Activated naive CD4-positive, alpha-beta T cell treated with anti-CD3 and anti-CD28 coated beads for 36 hours (primary cell): ENCODE measurements at regions of chr2 and their contacts with region 1.

Region 1: GRCh38 chr2:101736861-101737291 is 39.4 kb downstream of the MAP4K4 start:
- DNase-seq: peak; percentile 77
- H3K4me3 Mint-ChIP-seq: peak overlapping the region; percentile 8
- H3K27ac Mint-ChIP-seq: peak overlapping the region; percentile 89
- H3K4me1 Mint-ChIP-seq: peaks cover 90% of the 10 kb centered on the region
- H3K27me3 Mint-ChIP-seq: no peaks in the 10 kb centered on the region

Region 2: GRCh38 chr2:101012706-101013181 is 724.1 kb before region 1 on chr2:
- CTCF ChIA-PET with region 1: no interaction called
- intact Hi-C with region 1: no loop called
- DNase-seq: peak; percentile 44
- H3K4me3 Mint-ChIP-seq: no peak overlapping the region
- H3K27ac Mint-ChIP-seq: no peak overlapping the region
- H3K4me1 Mint-ChIP-seq: peaks cover 35% of the 10 kb centered on the region
- H3K27me3 Mint-ChIP-seq: no peaks in the 10 kb centered on the region

Region 3: GRCh38 chr2:101623031-101623521 is 113.8 kb before region 1 on chr2:
- CTCF ChIA-PET with region 1: no interaction called
- intact Hi-C with region 1: loop called (anchors 1 kb)
- DNase-seq: peak; percentile 17
- H3K4me3 Mint-ChIP-seq: peak overlapping the region; percentile 17
- H3K27ac Mint-ChIP-seq: peak overlapping the region; percentile 90
- H3K4me1 Mint-ChIP-seq: peaks cover 39% of the 10 kb centered on the region
- H3K27me3 Mint-ChIP-seq: no peaks in the 10 kb centered on the region

Region 4: GRCh38 chr2:101675512-101675911 is 61.4 kb before region 1 on chr2:
- CTCF ChIA-PET with region 1: no interaction called
- intact Hi-C with region 1: loop called (anchors 1 kb)
- DNase-seq: peak; percentile 21
- H3K4me3 Mint-ChIP-seq: no peak overlapping the region
- H3K27ac Mint-ChIP-seq: peak overlapping the region; percentile 3
- H3K4me1 Mint-ChIP-seq: peaks cover 23% of the 10 kb centered on the region
- H3K27me3 Mint-ChIP-seq: no peaks in the 10 kb centered on the region

Region 5: DNA sequence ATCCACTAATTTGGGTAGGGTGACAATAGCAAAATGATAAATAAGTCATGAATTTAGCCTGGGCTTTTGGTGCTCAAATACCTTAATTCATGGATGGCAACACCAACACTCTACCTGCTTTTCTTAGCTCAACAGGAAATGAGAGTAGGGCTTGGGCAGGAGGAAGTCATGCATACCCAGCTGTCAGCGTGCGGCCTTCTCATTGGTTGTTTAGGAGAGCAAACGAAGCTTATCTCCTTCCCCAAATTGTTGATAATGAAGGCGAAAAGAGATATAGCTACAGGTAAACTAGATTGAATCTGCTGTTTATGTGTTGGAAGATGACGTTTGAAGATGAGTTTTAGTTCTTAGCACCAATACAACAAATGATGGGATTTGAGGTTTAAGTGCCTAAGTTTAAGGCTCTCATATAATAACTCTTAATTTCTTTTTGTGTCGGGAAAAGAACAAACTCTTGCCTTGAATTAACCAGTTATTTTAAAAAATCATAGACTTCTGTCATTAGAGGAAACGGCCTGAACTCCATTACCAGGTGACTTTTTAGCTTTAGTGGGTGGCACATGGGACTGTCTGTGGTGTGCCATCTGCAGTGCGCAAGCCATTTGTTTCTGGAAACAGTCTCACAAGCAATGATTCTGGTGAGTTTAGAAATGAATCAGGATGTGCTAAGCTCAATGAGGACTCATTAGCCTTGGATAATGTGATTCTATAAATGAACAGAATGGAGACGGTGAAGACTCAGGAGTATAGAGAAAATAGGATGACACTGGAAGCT is 19.6 kb before region 1 on chr2:
- CTCF ChIA-PET with region 1: interaction called, 7 read pairs
- intact Hi-C with region 1: loop called (anchors 1 kb)
- DNase-seq: peak; percentile 75
- H3K4me3 Mint-ChIP-seq: peak overlapping the region; percentile 38
- H3K27ac Mint-ChIP-seq: peak overlapping the region; percentile 95
- H3K4me1 Mint-ChIP-seq: peaks cover 92% of the 10 kb centered on the region
- H3K27me3 Mint-ChIP-seq: no peaks in the 10 kb centered on the region

Region 6: DNA sequence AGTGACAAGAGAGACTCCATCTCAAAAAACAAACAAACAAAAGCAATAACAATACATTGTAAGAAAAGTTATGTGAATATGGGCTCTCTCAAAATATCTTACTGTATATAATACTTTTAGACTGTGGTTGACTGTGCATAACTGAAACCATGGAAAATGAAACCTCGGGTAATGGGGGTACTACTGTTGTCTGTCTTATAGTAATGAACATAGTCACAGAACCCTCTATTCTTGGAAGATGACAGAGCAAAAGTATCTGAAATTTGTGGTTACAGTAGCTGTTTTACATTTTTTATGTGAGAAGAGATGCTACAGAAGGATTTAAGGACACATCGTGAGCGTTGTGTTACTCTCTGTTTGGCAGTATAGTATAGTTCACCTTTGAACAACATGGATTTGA is 21.1 kb after region 1 on chr2:
- CTCF ChIA-PET with region 1: interaction called, 4 read pairs
- intact Hi-C with region 1: loop called (anchors 1 kb)
- DNase-seq: peak; percentile 60
- H3K4me3 Mint-ChIP-seq: peak overlapping the region; percentile 48
- H3K27ac Mint-ChIP-seq: peak overlapping the region; percentile 81
- H3K4me1 Mint-ChIP-seq: peaks cover 77% of the 10 kb centered on the region
- H3K27me3 Mint-ChIP-seq: no peaks in the 10 kb centered on the region

Region 7: DNA sequence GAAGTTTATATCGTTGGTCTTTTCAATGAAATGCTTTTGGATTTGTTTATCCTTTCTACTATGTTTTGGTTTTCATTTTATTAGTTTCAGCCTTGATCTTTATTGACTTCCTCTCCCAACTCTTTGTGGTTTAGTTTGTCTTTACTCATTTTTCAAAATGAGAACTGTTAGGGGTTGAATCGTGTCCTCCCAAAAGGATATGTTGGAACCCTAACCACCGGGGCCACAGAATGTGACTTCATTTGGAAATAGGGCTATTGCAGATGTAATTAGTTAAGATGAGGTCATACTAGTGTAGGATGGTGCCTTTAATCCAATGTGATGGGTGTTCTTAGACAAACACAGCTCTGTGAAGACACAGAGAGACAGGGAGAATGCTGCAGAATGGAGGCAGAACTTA is 194.5 kb after region 1 on chr2:
- CTCF ChIA-PET with region 1: no interaction called
- intact Hi-C with region 1: no loop called
- DNase-seq: no peak
- H3K4me3 Mint-ChIP-seq: no peak overlapping the region
- H3K27ac Mint-ChIP-seq: no peak overlapping the region
- H3K4me1 Mint-ChIP-seq: peaks cover 5% of the 10 kb centered on the region
- H3K27me3 Mint-ChIP-seq: peaks cover 2% of the 10 kb centered on the region

Region 8: DNA sequence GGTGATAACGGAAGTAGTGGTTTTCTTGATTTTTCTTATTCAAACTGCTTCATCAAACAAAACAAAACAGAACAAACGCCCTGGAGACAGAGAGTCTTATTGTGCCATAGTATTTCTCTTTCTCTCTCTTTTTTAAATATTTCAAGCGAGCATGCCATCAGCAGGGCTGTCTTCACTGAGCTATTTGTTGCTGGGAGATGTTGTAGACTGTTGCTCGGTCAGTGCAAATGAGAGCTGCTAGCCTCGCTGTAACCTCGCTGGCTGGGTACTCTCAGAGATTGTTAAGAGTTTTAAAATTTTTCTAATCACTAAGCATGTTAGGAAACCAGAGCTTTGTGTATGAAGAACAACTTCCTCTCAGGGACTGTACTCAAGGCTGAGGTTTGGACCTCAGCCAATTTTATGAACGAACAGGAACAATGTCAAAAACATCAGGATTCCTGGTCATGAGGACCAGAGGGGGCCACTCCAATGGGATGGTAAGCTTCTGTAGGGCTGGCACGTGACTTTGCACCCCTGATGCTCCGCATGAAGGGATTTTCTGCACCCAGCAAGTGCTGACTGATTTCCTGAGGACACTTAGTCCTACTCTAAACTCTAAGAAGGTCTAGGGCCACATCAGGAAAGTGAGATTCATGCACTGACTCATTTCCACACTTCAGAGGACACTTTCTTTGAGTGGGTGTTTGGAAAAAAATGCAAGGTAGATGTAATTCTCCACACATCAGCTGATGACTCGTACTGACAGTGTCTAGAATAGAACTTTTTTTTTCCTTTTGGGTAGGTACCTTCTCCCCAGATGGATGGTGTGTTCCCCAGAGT is 345.9 kb after region 1 on chr2:
- CTCF ChIA-PET with region 1: no interaction called
- intact Hi-C with region 1: loop called (anchors 1 kb)
- DNase-seq: peak; percentile 79
- H3K4me3 Mint-ChIP-seq: peak overlapping the region; percentile 30
- H3K27ac Mint-ChIP-seq: peak overlapping the region; percentile 91
- H3K4me1 Mint-ChIP-seq: peaks cover 60% of the 10 kb centered on the region
- H3K27me3 Mint-ChIP-seq: no peaks in the 10 kb centered on the region